Panc1 (cell line): ENCODE measurements at regions of chr11 and their contacts with region 1.

Region 1: GRCh38 chr11:73860202-73860601 is 16.4 kb downstream of the COA4 start:
- DNase-seq: no peak
- ATAC-seq: no peak
- H3K4me3 ChIP-seq: no peak overlapping the region
- H3K27ac ChIP-seq: no peak overlapping the region
- H3K4me1 ChIP-seq: no peaks in the 10 kb centered on the region
- H3K27me3 ChIP-seq: no peaks in the 10 kb centered on the region
- CTCF ChIP-seq: no peak

Region 2: DNA sequence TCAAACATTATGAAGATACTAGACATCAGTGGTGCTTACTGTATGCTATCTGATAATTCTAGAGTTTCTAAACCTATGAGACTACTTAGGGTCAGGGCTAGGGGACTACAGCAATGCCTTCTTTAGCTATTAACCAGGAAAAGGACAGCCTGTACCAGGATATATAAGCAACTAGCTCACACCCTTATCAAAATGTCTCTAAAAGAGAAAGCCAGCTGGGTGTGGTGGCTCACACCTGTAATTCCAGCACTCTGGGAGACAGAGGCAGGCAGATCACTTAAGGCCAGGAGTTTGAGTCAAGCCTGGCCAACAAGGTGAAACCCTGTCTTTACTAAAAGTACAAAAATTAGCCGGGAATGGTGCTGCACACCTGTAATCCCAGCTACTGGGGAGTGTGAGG is 155.1 kb before region 1 on chr11:
- CTCF ChIA-PET with region 1: no interaction called
- POLR2A ChIA-PET with region 1: no interaction called
- in situ Hi-C with region 1: no loop called
- intact Hi-C with region 1: no loop called
- DNase-seq: no peak
- ATAC-seq: no peak
- H3K4me3 ChIP-seq: no peak overlapping the region
- H3K27ac ChIP-seq: no peak overlapping the region
- H3K4me1 ChIP-seq: no peaks in the 10 kb centered on the region
- H3K27me3 ChIP-seq: no peaks in the 10 kb centered on the region
- CTCF ChIP-seq: no peak

Region 3: DNA sequence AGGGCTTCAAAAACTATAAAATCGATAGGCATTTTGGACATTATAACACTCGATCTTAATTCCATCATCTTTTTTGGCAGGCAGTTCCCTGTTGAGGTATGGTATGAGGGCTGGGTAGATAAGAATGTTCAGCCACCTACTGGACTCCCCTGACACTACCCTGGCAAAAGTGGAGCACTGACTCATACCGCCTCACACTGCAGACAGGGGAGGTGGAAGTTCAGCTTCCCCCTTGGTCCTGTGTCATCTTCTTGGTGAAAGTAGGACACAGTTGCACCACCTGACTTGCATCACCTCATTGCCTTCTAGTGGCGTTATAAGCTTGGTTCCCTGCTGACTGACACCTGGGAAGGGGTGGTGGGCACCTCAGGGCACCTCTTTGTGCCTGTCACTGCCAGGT is 47.0 kb after region 1 on chr11:
- CTCF ChIA-PET with region 1: no interaction called
- POLR2A ChIA-PET with region 1: interaction called, 10 read pairs
- in situ Hi-C with region 1: no loop called
- intact Hi-C with region 1: no loop called
- DNase-seq: no peak
- ATAC-seq: peak; percentile 87
- H3K4me3 ChIP-seq: no peak overlapping the region
- H3K27ac ChIP-seq: no peak overlapping the region
- H3K4me1 ChIP-seq: no peaks in the 10 kb centered on the region
- H3K27me3 ChIP-seq: no peaks in the 10 kb centered on the region
- CTCF ChIP-seq: no peak

Region 4: GRCh38 chr11:73939096-73939495 is 78.9 kb after region 1 on chr11:
- CTCF ChIA-PET with region 1: no interaction called
- POLR2A ChIA-PET with region 1: no interaction called
- in situ Hi-C with region 1: no loop called
- intact Hi-C with region 1: no loop called
- DNase-seq: no peak
- ATAC-seq: no peak
- H3K4me3 ChIP-seq: no peak overlapping the region
- H3K27ac ChIP-seq: no peak overlapping the region
- H3K4me1 ChIP-seq: no peaks in the 10 kb centered on the region
- H3K27me3 ChIP-seq: no peaks in the 10 kb centered on the region
- CTCF ChIP-seq: no peak

Region 5: GRCh38 chr11:74043450-74043849 is 183.2 kb after region 1 on chr11:
- CTCF ChIA-PET with region 1: no interaction called
- POLR2A ChIA-PET with region 1: no interaction called
- in situ Hi-C with region 1: no loop called
- intact Hi-C with region 1: no loop called
- DNase-seq: no peak
- ATAC-seq: no peak
- H3K4me3 ChIP-seq: no peak overlapping the region
- H3K27ac ChIP-seq: no peak overlapping the region
- H3K4me1 ChIP-seq: no peaks in the 10 kb centered on the region
- H3K27me3 ChIP-seq: no peaks in the 10 kb centered on the region
- CTCF ChIP-seq: no peak

Region 6: GRCh38 chr11:74112877-74113276 is 252.7 kb after region 1 on chr11:
- CTCF ChIA-PET with region 1: no interaction called
- POLR2A ChIA-PET with region 1: no interaction called
- in situ Hi-C with region 1: no loop called
- intact Hi-C with region 1: no loop called
- DNase-seq: no peak
- ATAC-seq: no peak
- H3K4me3 ChIP-seq: no peak overlapping the region
- H3K27ac ChIP-seq: no peak overlapping the region
- H3K4me1 ChIP-seq: no peaks in the 10 kb centered on the region
- H3K27me3 ChIP-seq: no peaks in the 10 kb centered on the region
- CTCF ChIP-seq: no peak